Esophagus muscularis mucosa (tissue), 4 donors: ENCODE measurements at regions of chr4 and their contacts with region 1.

Region 1: GRCh38 chr4:51853027-51853682 is 10.2 kb downstream of the DCUN1D4 start:
- DNase-seq: peak; percentile 82
- H3K4me3 ChIP-seq: no peak overlapping the region
- H3K27ac ChIP-seq: peak overlapping the region; percentile 42 to 49 (median 45)
- H3K4me1 ChIP-seq: peaks cover 40 to 88% (median 80%) of the 10 kb centered on the region in 4 donors
- H3K27me3 ChIP-seq: no peaks in the 10 kb centered on the region
- CTCF ChIP-seq: no peak
- EP300 ChIP-seq: no peak
- POLR2A ChIP-seq: no peak

Region 2: DNA sequence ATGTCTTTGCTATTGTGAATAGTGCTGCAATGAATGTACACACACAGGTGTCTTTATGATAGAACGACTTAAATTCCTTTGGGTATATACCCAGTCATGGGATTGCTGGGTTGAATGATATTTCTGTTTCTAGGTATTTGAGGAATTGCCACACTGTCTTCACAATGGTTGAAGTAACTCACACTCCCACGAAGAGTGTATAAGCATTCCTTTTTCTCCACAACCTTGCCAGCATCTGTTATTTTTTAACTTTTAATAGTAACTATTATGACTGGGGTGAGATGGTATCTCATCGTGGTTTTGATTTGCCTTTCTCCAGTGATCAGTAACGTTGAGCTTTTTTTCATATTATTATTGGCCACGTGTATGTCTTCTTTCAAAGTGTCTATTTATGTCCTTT is 27.8 kb before region 1 on chr4:
- intact Hi-C with region 1: no loop called
- DNase-seq: no peak
- H3K4me3 ChIP-seq: no peak overlapping the region
- H3K27ac ChIP-seq: no peak overlapping the region
- H3K4me1 ChIP-seq: no peaks in the 10 kb centered on the region
- H3K27me3 ChIP-seq: no peaks in the 10 kb centered on the region
- CTCF ChIP-seq: no peak
- EP300 ChIP-seq: no peak
- POLR2A ChIP-seq: no peak

Region 3: DNA sequence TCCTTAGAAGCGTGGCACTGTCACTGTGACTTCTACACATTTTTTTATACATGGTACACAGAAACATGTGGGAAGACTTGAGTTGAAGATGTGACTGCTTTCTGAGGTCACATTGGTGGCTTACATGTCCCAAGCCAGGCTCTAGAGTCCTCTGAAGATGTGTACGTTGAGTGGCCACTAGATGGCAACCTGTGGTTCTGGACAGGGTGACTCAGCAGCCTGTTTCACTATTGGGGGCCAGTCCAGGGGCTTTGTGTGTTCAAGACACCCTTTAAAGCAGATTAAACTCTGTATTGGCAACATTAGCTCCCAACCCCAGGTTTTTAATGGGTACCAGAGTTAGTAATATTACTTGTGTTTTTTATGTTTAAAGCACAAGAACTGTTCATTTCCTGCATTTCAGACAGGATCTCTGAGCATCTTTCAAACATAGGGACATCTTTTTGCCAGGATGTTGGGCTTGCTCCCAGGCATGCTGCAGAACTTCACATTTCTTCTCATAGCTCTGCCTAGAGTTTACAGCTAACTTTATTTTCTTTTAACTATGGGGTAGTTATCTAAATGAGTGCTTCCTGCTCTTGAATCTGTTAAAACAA is 42.8 kb after region 1 on chr4:
- intact Hi-C with region 1: loop called (anchors 5 kb)
- DNase-seq: no peak
- H3K4me3 ChIP-seq: no peak overlapping the region
- H3K27ac ChIP-seq: peak overlapping the region; percentile 22 to 53 (median 51)
- H3K4me1 ChIP-seq: peaks cover 4 to 49% (median 39%) of the 10 kb centered on the region in 4 donors
- H3K27me3 ChIP-seq: no peaks in the 10 kb centered on the region
- CTCF ChIP-seq: peak; percentile 61 to 78 (median 66)
- EP300 ChIP-seq: no peak
- POLR2A ChIP-seq: no peak

Region 4: DNA sequence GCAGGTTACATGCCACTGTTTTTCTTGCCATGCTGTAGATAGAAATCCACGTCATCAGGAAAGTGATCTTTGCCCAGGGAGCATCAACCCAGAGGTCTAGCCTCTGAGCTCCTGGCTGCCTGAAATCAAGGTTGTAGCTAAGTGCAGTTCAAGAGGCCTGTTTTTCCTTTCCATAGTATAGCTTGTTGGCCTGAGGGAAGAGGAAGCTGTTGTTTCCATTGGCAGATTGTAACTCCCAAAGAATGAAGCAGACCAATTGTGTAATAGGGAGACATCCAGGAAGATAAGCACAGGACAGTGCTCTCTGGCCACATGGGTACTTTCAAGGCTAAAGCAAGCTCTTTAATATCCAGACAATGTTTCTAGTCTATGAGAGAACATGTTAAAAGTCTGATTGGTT is 372.2 kb after region 1 on chr4:
- intact Hi-C with region 1: no loop called
- DNase-seq: no peak
- H3K4me3 ChIP-seq: no peak overlapping the region
- H3K27ac ChIP-seq: no peak overlapping the region
- H3K4me1 ChIP-seq: no peaks in the 10 kb centered on the region
- H3K27me3 ChIP-seq: no peaks in the 10 kb centered on the region
- CTCF ChIP-seq: no peak
- EP300 ChIP-seq: no peak
- POLR2A ChIP-seq: no peak

Region 5: DNA sequence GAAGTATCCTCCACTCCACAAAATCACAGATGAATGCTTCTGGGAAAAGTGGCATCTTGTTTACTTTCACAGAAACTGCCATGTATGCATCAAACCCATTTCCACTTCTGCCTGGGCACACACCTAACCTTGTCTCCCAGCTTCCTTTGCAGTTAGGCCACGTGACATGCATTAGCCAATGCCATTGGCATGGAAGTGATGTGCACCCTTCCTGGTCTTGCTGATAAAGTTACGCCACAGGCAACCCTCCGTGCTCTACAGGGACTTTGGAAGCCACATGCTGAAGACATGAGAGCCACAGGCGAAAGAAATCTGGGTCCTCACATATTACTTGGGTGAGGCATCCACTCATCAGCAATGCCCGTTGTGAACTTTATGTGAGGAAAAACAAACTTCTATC is 682.6 kb after region 1 on chr4:
- intact Hi-C with region 1: no loop called
- DNase-seq: peak; percentile 34
- H3K4me3 ChIP-seq: no peak overlapping the region
- H3K27ac ChIP-seq: no peak overlapping the region
- H3K4me1 ChIP-seq: peaks cover 0 to 3% (median 0%) of the 10 kb centered on the region in 4 donors
- H3K27me3 ChIP-seq: no peaks in the 10 kb centered on the region
- CTCF ChIP-seq: no peak
- EP300 ChIP-seq: no peak
- POLR2A ChIP-seq: no peak

Region 6: DNA sequence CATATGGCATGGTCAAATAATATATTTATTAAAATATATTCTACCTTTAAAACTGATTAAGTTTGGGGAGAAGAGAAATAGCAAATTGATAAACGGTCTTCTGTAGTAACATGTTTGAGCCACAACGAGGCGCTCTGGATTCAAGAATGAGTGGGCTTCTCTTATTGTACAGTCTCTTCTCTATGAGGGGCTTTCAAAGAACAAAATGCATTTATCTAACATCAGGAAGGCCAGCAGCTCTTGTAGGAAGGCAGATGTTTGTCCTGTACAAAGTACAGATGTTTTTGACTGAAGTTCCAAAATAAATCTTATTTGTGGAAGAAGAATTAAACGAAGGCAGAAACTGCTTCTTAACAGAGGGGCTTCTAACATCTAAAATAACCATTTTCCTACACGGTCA is 1162.5 kb after region 1 on chr4:
- intact Hi-C with region 1: no loop called
- DNase-seq: no peak
- H3K4me3 ChIP-seq: no peak overlapping the region
- H3K27ac ChIP-seq: peak overlapping the region in 1 of 4 donors; percentile 24
- H3K4me1 ChIP-seq: peaks cover 26 to 38% (median 33%) of the 10 kb centered on the region in 4 donors
- H3K27me3 ChIP-seq: no peaks in the 10 kb centered on the region
- CTCF ChIP-seq: peak; percentile 26 to 53 (median 49)
- EP300 ChIP-seq: no peak
- POLR2A ChIP-seq: no peak